Endothelial cell of umbilical vein (primary cell): ENCODE measurements at regions of chr6 and their contacts with region 1.

Region 1: DNA sequence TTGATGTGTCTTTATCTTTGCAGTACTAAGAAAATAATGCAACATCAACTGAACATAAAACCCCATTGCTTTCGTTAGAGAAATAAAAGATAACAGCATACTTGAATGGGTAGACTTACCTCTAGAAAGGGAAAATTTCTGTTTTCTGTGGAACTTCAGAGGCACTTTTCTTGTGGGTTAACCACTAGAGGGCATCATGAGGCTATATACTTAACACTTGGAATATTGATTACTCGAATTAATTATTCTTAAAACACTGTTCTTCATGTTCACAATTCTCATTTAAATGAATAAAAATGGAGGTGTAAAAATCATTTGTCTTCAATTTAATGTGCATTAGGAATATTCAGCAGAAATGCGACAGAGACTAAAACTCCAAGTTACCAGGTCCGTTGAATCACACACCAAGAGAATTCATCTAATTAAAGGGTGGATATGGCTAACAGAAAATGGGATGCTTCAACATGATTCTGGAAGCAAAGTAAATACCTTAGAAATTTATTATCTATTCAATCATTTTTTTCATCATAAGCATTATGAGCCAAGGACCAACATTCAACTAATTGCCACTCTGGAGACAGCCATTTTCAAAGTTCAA is 330.8 kb upstream of the PREP start:
- DNase-seq: peak; percentile 13
- H3K4me3 ChIP-seq: no peak overlapping the region
- H3K27ac ChIP-seq: no peak overlapping the region
- H3K4me1 ChIP-seq: no peaks in the 10 kb centered on the region
- H3K27me3 ChIP-seq: peaks cover 0 to 3% of the 10 kb centered on the region in 2 experiments
- CTCF ChIP-seq: peak; percentile 36 to 44
- POLR2A ChIP-seq: no peak

Region 2: GRCh38 chr6:105642708-105643107 is 91.0 kb before region 1 on chr6:
- CTCF ChIA-PET with region 1: no interaction called
- POLR2A ChIA-PET with region 1: no interaction called
- dilution Hi-C with region 1: no loop called
- intact Hi-C with region 1: no loop called
- DNase-seq: no peak
- H3K4me3 ChIP-seq: no peak overlapping the region
- H3K27ac ChIP-seq: no peak overlapping the region
- H3K4me1 ChIP-seq: no peaks in the 10 kb centered on the region
- H3K27me3 ChIP-seq: no peaks in the 10 kb centered on the region
- CTCF ChIP-seq: no peak
- POLR2A ChIP-seq: no peak

Region 3: DNA sequence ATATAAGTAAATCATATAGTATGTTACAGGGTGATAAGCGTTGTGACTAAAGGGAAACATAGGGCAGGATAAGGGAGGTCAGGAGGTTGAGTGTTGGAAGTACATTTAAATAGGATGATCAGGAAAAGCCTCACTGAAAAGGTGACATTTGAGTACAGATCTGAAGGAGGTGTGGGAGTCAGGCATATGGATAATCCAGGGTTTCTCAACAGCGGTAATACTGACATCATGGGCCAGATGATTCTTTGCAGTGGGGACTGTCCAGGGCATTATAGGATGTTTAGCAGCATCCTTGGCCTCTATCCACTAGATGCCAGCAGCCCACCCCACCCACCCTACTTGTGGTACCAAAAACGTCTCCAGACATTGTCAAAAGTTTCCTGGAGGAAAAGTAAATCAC is 38.2 kb before region 1 on chr6:
- CTCF ChIA-PET with region 1: no interaction called
- POLR2A ChIA-PET with region 1: no interaction called
- dilution Hi-C with region 1: no loop called
- intact Hi-C with region 1: no loop called
- DNase-seq: no peak
- H3K4me3 ChIP-seq: no peak overlapping the region
- H3K27ac ChIP-seq: no peak overlapping the region
- H3K4me1 ChIP-seq: no peaks in the 10 kb centered on the region
- H3K27me3 ChIP-seq: no peaks in the 10 kb centered on the region
- CTCF ChIP-seq: no peak
- POLR2A ChIP-seq: no peak

Region 4: DNA sequence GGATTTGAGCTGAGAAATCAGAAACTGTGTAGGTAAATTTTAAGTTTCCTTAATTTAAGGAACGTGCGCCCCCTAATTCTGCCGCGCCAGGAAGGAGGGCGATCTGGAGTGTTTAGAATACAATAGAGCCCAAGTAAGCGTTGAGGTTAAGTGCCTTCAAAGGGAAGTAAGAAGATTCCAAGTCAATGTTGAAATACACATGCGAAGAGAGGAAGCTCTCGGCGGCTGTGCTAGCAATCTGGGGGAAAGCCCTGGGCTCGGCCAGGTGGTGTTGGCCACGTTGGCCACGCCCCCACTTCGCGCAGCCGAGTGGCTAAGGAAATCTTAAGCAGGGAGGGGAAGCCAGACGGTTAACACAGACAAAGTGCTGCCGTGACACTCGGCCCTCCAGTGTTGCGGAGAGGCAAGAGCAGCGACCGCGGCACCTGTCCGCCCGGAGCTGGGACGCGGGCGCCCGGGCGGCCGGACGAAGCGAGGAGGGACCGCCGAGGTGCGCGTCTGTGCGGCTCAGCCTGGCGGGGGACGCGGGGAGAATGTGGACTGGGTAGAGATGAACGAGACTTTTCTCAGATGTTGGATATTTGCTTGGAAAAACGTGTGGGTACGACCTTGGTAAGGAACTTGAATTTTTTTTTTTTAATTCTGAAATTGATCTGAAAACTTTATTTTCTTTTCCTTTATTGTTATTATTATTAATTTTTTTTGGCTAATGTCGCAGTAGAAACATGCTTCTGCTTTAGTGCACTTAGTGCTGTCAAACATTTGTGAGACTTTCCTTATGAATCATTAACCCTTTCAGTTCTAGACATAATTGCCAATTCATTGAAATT is 352.5 kb after region 1 on chr6 and contains the start of gene PRDM1:
- CTCF ChIA-PET with region 1: no interaction called
- POLR2A ChIA-PET with region 1: no interaction called
- dilution Hi-C with region 1: no loop called
- intact Hi-C with region 1: loop called (anchors 10 kb)
- DNase-seq: peak; percentile 38
- H3K4me3 ChIP-seq: peak within 1 kb of the TSS; percentile 30 to 67 (median 64)
- H3K27ac ChIP-seq: no peak within 1 kb of the TSS
- H3K4me1 ChIP-seq: peaks cover 19% of the 10 kb centered on the region
- H3K27me3 ChIP-seq: peaks cover 8 to 24% of the 10 kb centered on the region in 2 experiments
- CTCF ChIP-seq: no peak
- POLR2A ChIP-seq: no peak
- total RNA-seq, gene PRDM1: 2.7 and 4.8 TPM in 2 replicates

Region 5: DNA sequence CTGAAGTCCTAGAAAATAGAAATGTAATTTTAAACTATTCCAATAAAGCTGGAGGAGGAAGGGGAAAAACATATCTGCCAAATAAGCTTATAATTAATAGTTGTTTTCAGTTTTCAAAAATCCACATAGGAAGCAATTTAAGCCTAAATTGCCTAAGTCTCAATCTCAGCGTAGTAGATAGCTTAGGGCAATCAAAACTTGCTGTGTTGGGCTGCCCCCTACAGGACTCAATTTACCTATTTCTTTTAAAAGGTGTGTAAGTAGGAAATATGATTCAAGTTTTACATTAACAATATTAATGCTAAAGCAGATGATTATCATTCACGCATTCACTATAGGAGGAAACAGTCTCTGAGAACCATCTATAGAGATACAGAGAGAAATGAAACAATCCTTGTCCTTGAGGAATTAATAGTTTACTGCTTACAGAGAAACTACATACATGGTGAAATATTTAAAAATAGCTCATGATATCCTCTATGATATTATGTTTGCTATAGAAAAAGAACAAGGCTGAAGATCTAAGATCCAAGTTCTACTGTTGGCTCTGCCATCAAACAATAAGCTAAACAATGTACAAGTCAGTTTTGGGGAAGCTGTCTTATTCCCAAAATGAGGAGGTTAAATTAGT is 489.8 kb after region 1 on chr6:
- CTCF ChIA-PET with region 1: interaction called, 16 read pairs
- POLR2A ChIA-PET with region 1: no interaction called
- dilution Hi-C with region 1: no loop called
- intact Hi-C with region 1: loop called (anchors 2 kb)
- DNase-seq: peak; percentile 75
- H3K4me3 ChIP-seq: no peak overlapping the region
- H3K27ac ChIP-seq: no peak overlapping the region
- H3K4me1 ChIP-seq: no peaks in the 10 kb centered on the region
- H3K27me3 ChIP-seq: no peaks in the 10 kb centered on the region
- CTCF ChIP-seq: peak; percentile 26 to 38
- POLR2A ChIP-seq: no peak